Heart right ventricle (tissue), 16 donors: ENCODE measurements at regions of chr21 and their contacts with region 1.

Region 1: GRCh38 chr21:42973991-42974831 is at the start of gene PKNOX1:
- DNase-seq: peak; percentile 98 to 99
- ATAC-seq: peak; percentile 93 to 98 (median 96)
- H3K4me3 ChIP-seq: peak within 1 kb of the TSS; percentile 53 to 99 (median 82)
- H3K27ac ChIP-seq: peak within 1 kb of the TSS; percentile 95 to 100 (median 98)
- H3K4me1 ChIP-seq: peaks cover 0 to 34% (median 21%) of the 10 kb centered on the region in 9 donors
- H3K27me3 ChIP-seq: no peaks in the 10 kb centered on the region
- CTCF ChIP-seq: no peak
- total RNA-seq, gene PKNOX1: 5.0 to 11.6 (median 7.7) TPM

Region 2: DNA sequence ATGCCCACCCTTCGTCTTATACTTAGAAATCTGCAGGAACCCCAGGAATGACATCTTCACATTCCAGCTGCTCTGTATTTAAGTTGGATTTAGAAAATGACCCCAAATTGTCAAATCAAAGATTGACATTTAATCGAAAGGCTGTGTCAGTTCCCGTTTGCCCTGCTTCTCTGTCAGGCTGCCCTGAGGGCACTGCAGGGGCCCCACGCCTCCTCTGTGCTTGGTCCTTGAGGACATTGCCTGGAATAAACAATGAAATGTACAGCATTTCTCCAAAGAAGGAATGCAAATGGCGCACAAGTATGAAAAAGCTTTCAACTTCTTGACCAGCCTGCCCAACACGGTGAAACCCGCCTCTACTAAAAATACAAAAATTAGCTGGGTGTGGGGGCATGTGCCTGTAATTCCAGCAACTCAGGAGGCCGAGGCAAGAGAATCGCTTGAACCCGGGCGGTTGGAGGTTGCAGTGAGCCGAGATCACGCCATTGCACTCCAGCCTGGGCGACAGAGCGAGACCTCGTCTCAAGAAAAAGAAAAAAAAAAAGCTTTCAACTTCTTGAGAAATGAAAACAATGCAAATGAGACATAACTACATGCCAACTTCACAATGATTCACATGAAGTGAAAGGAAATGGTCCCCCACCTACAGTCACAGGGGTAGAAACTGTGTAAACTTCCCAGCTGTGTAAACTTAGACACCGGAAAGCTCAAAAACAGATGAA is 581.3 kb before region 1 on chr21:
- intact Hi-C with region 1: loop called in 1 of 10 experiments (anchors 5 kb)
- DNase-seq: no peak
- ATAC-seq: peak in 2 of 8 donors; percentile 52 to 61
- H3K4me3 ChIP-seq: no peak overlapping the region
- H3K27ac ChIP-seq: no peak overlapping the region
- H3K4me1 ChIP-seq: peaks cover 0 to 13% (median 0%) of the 10 kb centered on the region in 9 donors
- H3K27me3 ChIP-seq: peaks cover 0 to 11% (median 0%) of the 10 kb centered on the region in 7 donors
- CTCF ChIP-seq: no peak

Region 3: DNA sequence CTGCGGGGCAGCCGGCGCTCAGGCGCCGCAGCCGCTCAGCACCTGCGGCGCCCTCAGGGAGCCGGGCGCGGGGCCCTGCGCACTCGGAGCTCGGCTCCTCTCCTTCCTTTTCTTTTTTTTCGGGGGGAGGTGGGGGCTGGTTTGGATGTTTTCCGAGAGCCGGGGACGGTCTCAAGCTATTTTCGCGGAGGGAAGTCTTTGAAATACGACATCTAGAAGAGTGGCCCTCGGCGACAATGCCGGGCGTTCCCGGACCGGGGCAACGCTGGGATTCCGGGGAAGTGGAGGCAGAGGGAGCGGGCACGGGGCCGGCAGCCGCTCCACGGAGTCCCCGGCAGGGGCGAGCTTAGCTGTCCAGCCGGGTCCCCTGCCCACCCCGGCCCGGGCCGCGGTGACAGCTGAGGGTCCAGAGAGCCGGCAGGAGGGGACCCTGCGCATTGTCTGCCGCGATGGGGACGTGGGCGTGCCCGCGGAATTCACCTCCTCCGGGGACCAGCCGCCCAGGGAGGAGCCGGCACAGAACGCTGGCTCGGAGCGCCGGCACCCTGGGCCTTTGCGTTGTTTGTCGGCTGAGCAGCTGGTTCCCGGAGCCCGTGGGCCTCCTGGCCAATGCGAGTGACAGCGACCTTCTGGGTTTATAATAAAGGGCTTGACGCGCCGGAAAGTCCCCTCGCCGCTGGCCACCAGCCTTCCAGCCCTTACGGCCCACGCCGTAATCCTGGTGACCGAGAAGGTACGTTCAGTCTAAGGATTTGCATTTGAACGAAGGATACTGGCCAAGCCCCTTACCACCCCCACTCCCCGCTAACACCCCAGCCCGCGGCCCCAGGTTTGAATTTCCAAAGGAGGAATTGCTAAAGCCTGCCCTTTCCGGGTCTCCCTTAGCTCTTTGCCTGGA is 460.0 kb before region 1 on chr21:
- intact Hi-C with region 1: loop called in 1 of 10 experiments (anchors 10 kb)
- DNase-seq: peak; percentile 41 to 64
- ATAC-seq: peak; percentile 62 to 86 (median 76)
- H3K4me3 ChIP-seq: peak overlapping the region; percentile 68 to 99 (median 90)
- H3K27ac ChIP-seq: peak overlapping the region; percentile 29 to 86 (median 72)
- H3K4me1 ChIP-seq: peaks cover 0 to 24% (median 15%) of the 10 kb centered on the region in 9 donors
- H3K27me3 ChIP-seq: no peaks in the 10 kb centered on the region
- CTCF ChIP-seq: peak in 1 of 9 donors; percentile 4

Region 4: GRCh38 chr21:42593007-42593806 is 381.0 kb before region 1 on chr21:
- intact Hi-C with region 1: no loop called
- DNase-seq: peak; percentile 60 to 69
- ATAC-seq: peak; percentile 88 to 97 (median 92)
- H3K4me3 ChIP-seq: peak overlapping the region in 2 of 10 donors; percentile 16 to 22
- H3K27ac ChIP-seq: no peak overlapping the region
- H3K4me1 ChIP-seq: peaks cover 0 to 11% (median 8%) of the 10 kb centered on the region in 9 donors
- H3K27me3 ChIP-seq: peaks cover 4 to 24% (median 12%) of the 10 kb centered on the region in 7 donors
- CTCF ChIP-seq: peak; percentile 79 to 91 (median 84)

Region 5: DNA sequence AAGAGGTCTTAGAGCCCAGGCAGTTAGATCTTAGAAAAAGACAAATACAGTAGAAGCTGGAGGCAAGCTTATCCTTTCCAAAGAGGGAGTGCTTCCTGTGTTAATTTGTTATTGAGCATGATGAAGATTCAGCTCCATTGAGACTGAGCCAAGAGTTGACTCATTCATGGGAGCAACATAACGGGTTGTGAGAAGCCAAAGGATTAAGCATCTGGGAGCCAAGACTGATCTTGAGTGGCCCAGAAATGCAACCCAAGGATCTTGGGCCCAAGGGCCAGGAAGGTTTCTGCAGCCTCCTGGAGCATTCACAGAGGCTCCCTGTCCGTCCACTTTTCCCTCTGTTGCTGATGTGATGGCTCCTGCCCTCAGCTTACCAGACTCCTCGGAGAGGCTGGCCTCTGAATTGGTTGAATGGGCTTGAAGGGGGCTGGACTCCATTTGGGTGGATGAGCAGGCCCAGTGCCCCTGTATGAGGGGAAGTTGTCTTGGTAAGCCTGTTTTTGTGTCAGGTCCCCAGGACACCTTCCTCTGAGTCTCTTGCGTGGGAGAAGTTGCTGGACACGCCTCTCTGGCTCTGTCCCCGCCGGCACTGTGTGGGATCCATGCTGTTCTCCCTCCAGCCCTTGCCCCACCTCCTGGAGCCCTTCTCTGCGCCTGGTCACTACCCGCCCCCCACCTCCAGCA is 278.4 kb before region 1 on chr21:
- intact Hi-C with region 1: no loop called
- DNase-seq: peak in 1 of 2 donors; percentile 42
- ATAC-seq: peak in 7 of 8 donors; percentile 57 to 81 (median 70)
- H3K4me3 ChIP-seq: no peak overlapping the region
- H3K27ac ChIP-seq: no peak overlapping the region
- H3K4me1 ChIP-seq: peaks cover 0 to 18% (median 8%) of the 10 kb centered on the region in 9 donors
- H3K27me3 ChIP-seq: peaks cover 0 to 9% (median 0%) of the 10 kb centered on the region in 7 donors
- CTCF ChIP-seq: no peak

Region 6: DNA sequence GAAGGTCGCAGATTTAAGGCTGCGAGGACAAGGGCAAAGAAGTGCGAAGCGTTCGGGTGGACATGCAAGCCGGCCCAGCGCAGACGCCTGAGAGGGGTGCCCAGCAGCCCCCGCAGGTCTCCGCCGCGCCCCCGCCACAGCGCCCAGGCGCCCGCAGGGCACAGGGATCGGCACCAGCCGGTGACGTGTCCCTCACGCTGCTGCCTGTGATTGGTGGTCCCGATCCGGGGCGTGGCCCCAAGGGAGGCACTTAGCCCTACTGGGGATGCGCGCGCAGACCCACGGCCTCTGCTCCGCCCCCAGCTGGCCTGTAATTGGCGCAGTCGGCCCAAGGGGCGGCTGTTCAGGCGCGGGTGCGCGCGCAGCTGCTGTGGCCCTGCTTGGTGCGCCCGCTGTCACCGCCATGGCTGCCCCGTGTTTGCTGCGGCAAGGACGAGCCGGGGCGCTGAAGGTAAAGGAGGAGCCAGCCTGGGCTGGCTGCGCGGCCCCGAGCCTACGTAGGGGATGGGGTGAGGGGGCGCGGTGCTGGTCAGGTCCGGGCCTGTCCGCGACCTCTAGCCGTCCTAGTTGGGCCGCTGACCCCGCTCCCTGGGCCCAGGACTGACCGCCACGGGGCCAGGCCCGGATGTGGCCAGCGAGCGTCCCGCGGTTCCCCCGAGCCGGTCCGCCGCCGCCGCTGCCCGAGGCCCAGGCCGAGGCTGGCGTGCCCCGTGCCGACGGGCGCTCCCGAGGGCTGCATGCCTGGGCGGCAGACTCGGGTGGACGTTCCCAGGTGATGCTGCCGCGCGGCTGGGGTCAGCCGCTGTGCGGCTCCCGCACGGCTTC is 81.1 kb before region 1 on chr21 and contains the start of gene NDUFV3:
- intact Hi-C with region 1: loop called in 2 of 10 experiments (anchors 10 kb)
- DNase-seq: peak; percentile 99 to 100
- ATAC-seq: peak; percentile 97 to 100 (median 99)
- H3K4me3 ChIP-seq: peak within 1 kb of the TSS; percentile 58 to 99 (median 86)
- H3K27ac ChIP-seq: peak within 1 kb of the TSS; percentile 86 to 99 (median 96)
- H3K4me1 ChIP-seq: peaks cover 5 to 28% (median 20%) of the 10 kb centered on the region in 9 donors
- H3K27me3 ChIP-seq: no peaks in the 10 kb centered on the region
- CTCF ChIP-seq: no peak
- total RNA-seq, gene NDUFV3: 42.6 to 63.7 (median 52.2) TPM

Region 7: GRCh38 chr21:42923541-42924432 is 50.4 kb before region 1 on chr21:
- intact Hi-C with region 1: loop called in 1 of 10 experiments (anchors 10 kb)
- DNase-seq: peak; percentile 25 to 73
- ATAC-seq: peak; percentile 72 to 93 (median 86)
- H3K4me3 ChIP-seq: peak overlapping the region in 2 of 10 donors; percentile 6 to 7
- H3K27ac ChIP-seq: peak overlapping the region in 1 of 10 donors; percentile 44
- H3K4me1 ChIP-seq: peaks cover 0 to 12% (median 4%) of the 10 kb centered on the region in 9 donors
- H3K27me3 ChIP-seq: no peaks in the 10 kb centered on the region
- CTCF ChIP-seq: peak; percentile 50 to 83 (median 74)